Adrenal gland (tissue), 19 donors: ENCODE measurements at regions of chr20 and their contacts with region 1.

Region 1: DNA sequence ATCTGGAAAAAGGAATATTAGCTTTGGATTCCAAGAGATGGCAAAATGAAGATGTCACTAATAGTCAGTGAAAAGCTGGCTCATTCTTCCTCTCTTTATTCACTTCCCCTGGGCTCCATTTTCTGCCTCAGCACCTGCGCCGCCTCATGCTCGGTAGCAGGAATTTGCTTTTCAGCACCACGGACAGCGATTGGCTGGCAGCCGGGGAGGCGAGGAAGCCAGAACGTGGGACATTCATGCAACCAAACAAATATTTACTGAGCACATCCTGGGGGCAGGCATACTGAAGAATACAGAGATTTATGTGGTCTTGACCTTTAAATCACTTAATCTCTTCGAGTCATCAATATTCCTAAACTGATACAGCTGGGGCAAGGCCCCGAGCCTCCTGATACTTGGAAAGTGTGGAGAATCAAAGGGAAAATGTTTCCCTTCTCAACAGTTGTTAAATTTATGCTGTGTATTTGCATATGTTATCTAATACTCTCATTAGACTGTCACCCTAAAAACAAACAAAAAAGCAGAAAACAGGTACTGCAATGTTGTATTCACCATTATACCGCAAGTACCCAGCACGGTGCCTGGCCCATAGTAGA is 12.1 kb upstream of the PDYN start:
- DNase-seq: peak; percentile 63 to 83 (median 74)
- H3K4me3 ChIP-seq: no peak overlapping the region
- H3K27ac ChIP-seq: no peak overlapping the region
- H3K4me1 ChIP-seq: peaks cover 0 to 10% of the 10 kb centered on the region in 2 donors
- H3K27me3 ChIP-seq: no peaks in the 10 kb centered on the region
- CTCF ChIP-seq: no peak
- POLR2A ChIP-seq: no peak

Region 2: DNA sequence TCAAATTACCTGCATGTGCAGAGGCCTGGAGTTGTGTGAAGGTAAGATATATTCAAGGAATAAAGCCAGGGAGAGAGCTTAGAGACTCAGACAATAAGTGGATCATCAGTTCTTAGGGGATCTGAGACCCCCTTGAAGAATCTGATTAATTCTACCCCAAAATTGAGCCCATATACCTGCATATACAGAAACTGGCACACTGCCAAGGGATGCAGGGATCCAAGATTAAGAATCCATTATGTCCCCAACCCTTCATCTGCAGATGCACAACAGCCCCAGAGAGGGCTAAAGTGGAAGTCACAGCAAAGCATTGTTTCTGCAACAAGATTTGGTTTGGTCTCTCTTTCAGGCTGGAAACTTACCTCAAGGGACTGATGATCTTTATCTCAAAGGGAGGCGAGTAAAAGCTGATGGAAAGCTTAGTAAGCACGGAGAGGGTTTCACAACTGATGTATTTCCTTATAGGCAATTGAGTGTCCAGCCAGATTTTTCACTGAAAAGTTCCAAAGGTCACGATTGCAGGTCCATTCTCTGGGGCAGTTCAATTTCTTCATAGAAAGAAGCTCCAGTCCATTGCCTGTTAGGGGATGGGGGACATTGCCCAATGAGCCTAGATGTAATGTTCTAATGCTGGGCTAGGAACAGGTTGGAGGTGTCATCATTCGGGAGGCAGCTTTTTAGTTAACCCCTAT is 74.8 kb after region 1 on chr20:
- intact Hi-C with region 1: loop called in 1 of 2 experiments (anchors 2 kb)
- DNase-seq: no peak
- H3K4me3 ChIP-seq: no peak overlapping the region
- H3K27ac ChIP-seq: no peak overlapping the region
- H3K4me1 ChIP-seq: no peaks in the 10 kb centered on the region
- H3K27me3 ChIP-seq: peaks cover 3% of the 10 kb centered on the region
- CTCF ChIP-seq: no peak
- POLR2A ChIP-seq: no peak

Region 3: GRCh38 chr20:2151858-2152281 is 145.9 kb after region 1 on chr20:
- intact Hi-C with region 1: no loop called
- DNase-seq: no peak
- H3K4me3 ChIP-seq: no peak overlapping the region
- H3K27ac ChIP-seq: peak overlapping the region in 1 of 5 donors; percentile 5
- H3K4me1 ChIP-seq: peaks cover 0 to 13% of the 10 kb centered on the region in 2 donors
- H3K27me3 ChIP-seq: no peaks in the 10 kb centered on the region
- CTCF ChIP-seq: no peak
- POLR2A ChIP-seq: no peak

Region 4: DNA sequence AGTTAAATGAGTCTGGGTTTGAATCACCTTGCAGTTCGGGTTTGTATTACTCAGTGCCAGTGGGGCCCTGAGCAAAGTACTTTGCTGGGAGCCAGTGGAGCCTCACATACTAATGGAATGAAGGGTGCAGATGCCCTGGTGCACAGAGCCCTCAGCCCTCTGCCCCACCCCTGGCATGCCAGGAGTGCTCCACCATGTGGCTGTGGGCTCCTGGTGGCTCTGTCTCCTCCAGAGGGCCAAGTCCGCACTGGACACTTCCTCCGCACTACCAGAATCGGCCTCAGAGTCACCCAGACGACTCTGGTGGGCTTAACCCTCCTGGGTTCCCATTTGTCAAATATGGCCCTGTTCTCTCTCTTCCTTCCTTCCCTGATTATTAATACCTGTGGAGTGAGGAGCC is 189.7 kb after region 1 on chr20:
- intact Hi-C with region 1: no loop called
- DNase-seq: no peak
- H3K4me3 ChIP-seq: no peak overlapping the region
- H3K27ac ChIP-seq: no peak overlapping the region
- H3K4me1 ChIP-seq: no peaks in the 10 kb centered on the region
- H3K27me3 ChIP-seq: no peaks in the 10 kb centered on the region
- CTCF ChIP-seq: no peak
- POLR2A ChIP-seq: no peak